ENCODE measurements at regions of chr12 and their contacts with region 1.

Region 1: GRCh38 chr12:13135371-13136178 is 32.1 kb upstream of the GSG1 start:
- DNase-seq: peak; percentile 91
- H3K4me3 Mint-ChIP-seq: peak overlapping the region; percentile 65
- H3K27ac Mint-ChIP-seq: peak overlapping the region; percentile 78
- H3K4me1 Mint-ChIP-seq: peaks cover 66% of the 10 kb centered on the region
- H3K27me3 Mint-ChIP-seq: no peaks in the 10 kb centered on the region
- CTCF ChIP-seq: peak; percentile 49

Region 2: DNA sequence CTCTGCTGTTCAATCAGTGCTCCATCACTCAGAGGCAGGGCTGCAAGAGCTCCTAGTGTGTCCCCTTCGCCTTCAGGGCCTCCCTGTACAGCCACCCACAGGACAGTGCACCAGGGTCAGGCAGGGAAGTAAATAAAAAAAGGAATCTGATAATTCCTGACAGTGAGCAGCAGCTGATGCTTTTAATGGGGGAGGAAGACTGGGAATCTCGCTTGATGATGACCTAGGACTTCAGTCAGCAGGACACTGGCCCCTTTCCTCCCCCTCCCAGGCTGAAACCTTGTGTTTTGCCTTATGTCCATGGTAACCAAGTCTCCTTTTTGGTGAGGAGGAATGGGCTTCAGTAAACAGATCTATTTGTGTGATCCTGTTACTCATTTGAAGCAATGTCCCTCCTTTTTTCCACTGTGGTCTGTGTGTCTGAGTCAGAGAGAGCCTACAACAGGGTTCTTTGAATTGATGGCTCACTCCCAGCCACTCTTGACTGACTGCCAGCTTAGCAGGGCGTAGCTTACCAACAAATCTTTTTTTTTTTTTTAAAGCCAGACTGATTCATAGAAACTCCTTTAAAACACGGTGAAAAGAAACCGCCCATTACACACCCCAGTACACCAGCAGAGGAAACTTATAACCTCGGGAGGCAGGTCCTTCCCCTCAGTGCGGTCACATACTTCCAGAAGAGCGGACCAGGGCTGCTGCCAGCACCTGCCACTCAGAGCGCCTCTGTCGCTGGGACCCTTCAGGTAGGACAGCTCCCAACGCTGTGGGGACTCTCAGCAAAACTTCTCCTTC is 60.8 kb after region 1 on chr12 and contains the start of gene EMP1:
- CTCF ChIA-PET with region 1: interaction called, 6 read pairs
- intact Hi-C with region 1: loop called (anchors 2 kb)
- DNase-seq: peak; percentile 88
- H3K4me3 Mint-ChIP-seq: peak within 1 kb of the TSS; percentile 76
- H3K27ac Mint-ChIP-seq: peak within 1 kb of the TSS; percentile 68
- H3K4me1 Mint-ChIP-seq: peaks cover 55% of the 10 kb centered on the region
- H3K27me3 Mint-ChIP-seq: no peaks in the 10 kb centered on the region
- CTCF ChIP-seq: no peak
- total RNA-seq, gene EMP1: 128 and 146 TPM in 2 replicates